ENCODE measurements at regions of chr9 and their contacts with region 1.

Region 1: GRCh38 chr9:136882109-136882946 is 4.0 kb upstream of the TRAF2 start:
- DNase-seq: peak; percentile 87
- CTCF ChIP-seq: no peak

Region 2: DNA sequence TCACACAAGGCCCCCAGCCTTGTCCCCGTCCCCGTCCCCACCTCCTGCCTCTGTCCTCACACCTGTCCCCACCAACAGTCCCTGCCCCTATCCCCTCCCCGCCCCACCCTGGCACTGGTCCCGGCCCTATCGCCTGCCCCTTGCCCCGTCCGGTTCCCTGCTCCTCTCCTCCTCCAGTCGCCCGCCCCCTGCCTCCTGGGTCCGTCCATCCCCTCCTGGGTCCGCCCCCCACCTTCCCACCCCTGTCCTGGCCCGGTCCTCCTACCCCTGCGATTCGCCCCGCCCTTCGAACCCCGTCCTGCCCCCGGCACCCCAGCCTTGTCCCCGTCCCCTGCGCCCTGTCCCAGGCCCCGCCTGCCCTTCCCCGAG is 16.6 kb before region 1 on chr9:
- CTCF ChIA-PET with region 1: interaction called, 10 read pairs
- POLR2A ChIA-PET with region 1: interaction called, 4 read pairs
- DNase-seq: no peak
- CTCF ChIP-seq: no peak

Region 3: GRCh38 chr9:136928591-136928990 is 46.3 kb after region 1 on chr9:
- CTCF ChIA-PET with region 1: no interaction called
- POLR2A ChIA-PET with region 1: no interaction called
- DNase-seq: no peak
- CTCF ChIP-seq: no peak

Measured in GM10248 (cell line).